Panc1 (cell line): ENCODE measurements at regions of chr2 and their contacts with region 1.

Region 1: GRCh38 chr2:101151141-101151858 is at the start of gene TBC1D8:
- DNase-seq: no peak
- ATAC-seq: peak; percentile 83
- H3K4me3 ChIP-seq: peak within 1 kb of the TSS; percentile 93 to 98
- H3K27ac ChIP-seq: peak within 1 kb of the TSS; percentile 100
- H3K4me1 ChIP-seq: peaks cover 48% of the 10 kb centered on the region
- H3K27me3 ChIP-seq: no peaks in the 10 kb centered on the region
- CTCF ChIP-seq: no peak
- total RNA-seq, gene TBC1D8: 139 TPM

Region 2: GRCh38 chr2:100606726-100607343 is 544.5 kb before region 1 on chr2:
- CTCF ChIA-PET with region 1: no interaction called
- POLR2A ChIA-PET with region 1: no interaction called
- in situ Hi-C with region 1: no loop called
- intact Hi-C with region 1: no loop called
- DNase-seq: peak; percentile 53
- ATAC-seq: peak; percentile 83
- H3K4me3 ChIP-seq: peak overlapping the region; percentile 8 to 32; a peak in 3 of 4 replicates
- H3K27ac ChIP-seq: peak overlapping the region; percentile 44; the same call in 1 of the 2 replicates
- H3K4me1 ChIP-seq: peaks cover 7% of the 10 kb centered on the region
- H3K27me3 ChIP-seq: no peaks in the 10 kb centered on the region
- CTCF ChIP-seq: peak; percentile 90

Region 3: GRCh38 chr2:100924520-100925451 is 226.5 kb before region 1 on chr2:
- CTCF ChIA-PET with region 1: no interaction called
- POLR2A ChIA-PET with region 1: no interaction called
- in situ Hi-C with region 1: no loop called
- intact Hi-C with region 1: no loop called
- DNase-seq: no peak
- ATAC-seq: peak; percentile 40
- H3K4me3 ChIP-seq: no peak overlapping the region
- H3K27ac ChIP-seq: no peak overlapping the region
- H3K4me1 ChIP-seq: no peaks in the 10 kb centered on the region
- H3K27me3 ChIP-seq: no peaks in the 10 kb centered on the region
- CTCF ChIP-seq: no peak

Region 4: DNA sequence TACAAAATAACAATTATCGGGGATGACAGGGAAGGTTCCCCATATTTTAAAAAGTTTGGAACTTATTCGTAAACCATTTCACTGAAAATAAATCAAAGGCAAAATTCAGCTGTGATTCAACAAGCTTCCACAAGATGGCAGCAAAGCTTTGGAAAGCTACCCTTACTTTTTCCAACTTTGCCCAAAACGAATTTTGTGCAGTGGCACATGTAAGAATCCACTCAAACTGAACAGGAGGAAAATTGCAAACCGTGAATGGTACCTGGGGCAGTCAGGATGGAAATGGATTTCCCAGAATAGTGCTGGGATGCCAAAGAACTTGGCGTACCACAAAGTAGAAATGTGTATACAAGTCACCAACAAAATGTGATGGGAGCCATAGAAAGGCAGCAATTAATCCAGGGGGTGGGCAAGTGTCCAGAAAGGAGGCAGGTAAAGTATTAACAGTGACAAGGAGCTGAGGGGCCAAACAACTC is 138.6 kb before region 1 on chr2:
- CTCF ChIA-PET with region 1: interaction called, 8 read pairs
- POLR2A ChIA-PET with region 1: interaction called, 5 read pairs
- in situ Hi-C with region 1: no loop called
- intact Hi-C with region 1: loop called (anchors 2 kb)
- DNase-seq: no peak
- ATAC-seq: no peak
- H3K4me3 ChIP-seq: no peak overlapping the region
- H3K27ac ChIP-seq: peak overlapping the region; percentile 44; the same call in 1 of the 2 replicates
- H3K4me1 ChIP-seq: peaks cover 40% of the 10 kb centered on the region
- H3K27me3 ChIP-seq: no peaks in the 10 kb centered on the region
- CTCF ChIP-seq: peak; percentile 85

Region 5: DNA sequence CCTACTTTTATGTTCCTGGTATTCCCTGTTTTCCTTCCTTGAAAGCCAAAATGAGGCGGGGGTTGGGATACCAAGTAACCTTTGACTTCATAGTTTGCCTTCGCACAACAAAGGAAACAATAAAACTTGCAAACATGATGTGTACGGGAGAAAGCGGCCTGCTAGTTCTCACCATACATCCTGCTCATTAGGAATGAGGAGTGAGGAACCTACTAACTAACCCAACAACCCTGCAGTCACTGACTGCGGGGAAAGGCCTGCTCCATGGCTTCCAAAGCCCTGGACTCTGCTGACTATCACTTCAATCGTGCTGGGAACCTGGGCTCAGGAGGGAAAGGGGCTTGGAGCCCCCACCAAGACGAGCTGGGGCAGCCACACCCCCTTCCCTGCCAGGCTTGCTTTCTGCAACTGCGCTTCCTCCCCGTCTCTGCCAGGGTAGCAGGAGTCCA is 125.0 kb before region 1 on chr2:
- CTCF ChIA-PET with region 1: no interaction called
- POLR2A ChIA-PET with region 1: no interaction called
- in situ Hi-C with region 1: no loop called
- intact Hi-C with region 1: loop called (anchors 5 kb)
- DNase-seq: no peak
- ATAC-seq: no peak
- H3K4me3 ChIP-seq: no peak overlapping the region
- H3K27ac ChIP-seq: no peak overlapping the region
- H3K4me1 ChIP-seq: no peaks in the 10 kb centered on the region; the same call in 1 of the 2 replicates
- H3K27me3 ChIP-seq: no peaks in the 10 kb centered on the region
- CTCF ChIP-seq: no peak

Region 6: DNA sequence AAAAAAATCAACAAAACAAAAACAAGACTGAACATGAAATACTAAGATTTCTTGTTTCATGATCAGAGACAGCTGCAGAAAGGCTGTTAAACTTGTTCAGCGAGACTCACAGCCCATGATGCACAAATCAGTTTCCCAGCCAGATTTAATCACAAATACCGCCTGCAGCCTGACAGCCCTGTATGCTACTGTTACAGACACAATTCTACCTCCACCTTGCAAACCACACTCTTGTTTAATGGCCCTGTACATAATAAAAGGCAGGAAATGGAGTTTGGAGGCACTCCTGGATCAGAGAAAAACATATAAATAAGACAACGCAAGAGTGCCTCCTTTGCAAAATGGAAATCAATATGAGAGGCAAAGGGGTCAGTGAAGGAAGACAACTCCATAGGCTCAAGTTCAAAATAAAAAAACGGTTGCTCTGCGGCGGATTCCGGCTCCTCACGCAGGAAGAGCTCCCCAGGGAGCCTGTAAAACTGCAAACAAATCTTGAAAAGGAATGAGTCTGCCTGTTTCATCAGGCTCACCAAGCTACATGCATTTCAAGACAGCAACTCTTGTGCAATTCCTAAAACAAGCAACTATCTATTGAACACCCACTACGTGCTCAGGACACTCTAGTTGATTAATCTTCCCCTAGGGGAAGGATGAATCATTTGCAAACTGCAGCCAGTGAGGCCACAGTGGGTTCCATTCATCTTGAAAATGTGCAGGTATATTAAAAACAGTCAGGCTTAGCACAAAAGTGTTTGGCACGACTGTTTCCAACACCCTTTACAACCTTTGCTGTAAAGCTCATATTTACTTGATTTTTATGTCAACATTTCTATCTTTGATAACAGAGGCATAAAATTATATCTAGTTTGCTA is 37.7 kb before region 1 on chr2:
- CTCF ChIA-PET with region 1: no interaction called
- POLR2A ChIA-PET with region 1: no interaction called
- in situ Hi-C with region 1: no loop called
- intact Hi-C with region 1: loop called (anchors 5 kb)
- DNase-seq: no peak
- ATAC-seq: peak; percentile 79
- H3K4me3 ChIP-seq: peak overlapping the region in 1 of 2 experiments; percentile 30; a peak in 2 of 4 replicates
- H3K27ac ChIP-seq: peak overlapping the region; percentile 100
- H3K4me1 ChIP-seq: peaks cover 92% of the 10 kb centered on the region
- H3K27me3 ChIP-seq: no peaks in the 10 kb centered on the region
- CTCF ChIP-seq: no peak

Region 7: GRCh38 chr2:101205521-101205998 is 54.3 kb after region 1 on chr2:
- CTCF ChIA-PET with region 1: interaction called, 3 read pairs
- POLR2A ChIA-PET with region 1: no interaction called
- in situ Hi-C with region 1: no loop called
- intact Hi-C with region 1: loop called (anchors 5 kb)
- DNase-seq: peak; percentile 71
- ATAC-seq: peak; percentile 98
- H3K4me3 ChIP-seq: peak overlapping the region; percentile 30 to 48
- H3K27ac ChIP-seq: peak overlapping the region; percentile 68
- H3K4me1 ChIP-seq: peaks cover 12% of the 10 kb centered on the region
- H3K27me3 ChIP-seq: no peaks in the 10 kb centered on the region
- CTCF ChIP-seq: peak; percentile 82